GM10248 (cell line): ENCODE measurements at regions of chr7 and their contacts with region 1.

Region 1: GRCh38 chr7:134856091-134856490 is 76.7 kb downstream of the CALD1 start:
- DNase-seq: no peak
- CTCF ChIP-seq: no peak

Region 2: GRCh38 chr7:134845468-134845867 is 10.6 kb before region 1 on chr7:
- CTCF ChIA-PET with region 1: interaction called, 12 read pairs
- POLR2A ChIA-PET with region 1: no interaction called
- DNase-seq: peak; percentile 26
- CTCF ChIP-seq: peak; percentile 34